ENCODE measurements at regions of chr10 and their contacts with region 1.

Region 1: DNA sequence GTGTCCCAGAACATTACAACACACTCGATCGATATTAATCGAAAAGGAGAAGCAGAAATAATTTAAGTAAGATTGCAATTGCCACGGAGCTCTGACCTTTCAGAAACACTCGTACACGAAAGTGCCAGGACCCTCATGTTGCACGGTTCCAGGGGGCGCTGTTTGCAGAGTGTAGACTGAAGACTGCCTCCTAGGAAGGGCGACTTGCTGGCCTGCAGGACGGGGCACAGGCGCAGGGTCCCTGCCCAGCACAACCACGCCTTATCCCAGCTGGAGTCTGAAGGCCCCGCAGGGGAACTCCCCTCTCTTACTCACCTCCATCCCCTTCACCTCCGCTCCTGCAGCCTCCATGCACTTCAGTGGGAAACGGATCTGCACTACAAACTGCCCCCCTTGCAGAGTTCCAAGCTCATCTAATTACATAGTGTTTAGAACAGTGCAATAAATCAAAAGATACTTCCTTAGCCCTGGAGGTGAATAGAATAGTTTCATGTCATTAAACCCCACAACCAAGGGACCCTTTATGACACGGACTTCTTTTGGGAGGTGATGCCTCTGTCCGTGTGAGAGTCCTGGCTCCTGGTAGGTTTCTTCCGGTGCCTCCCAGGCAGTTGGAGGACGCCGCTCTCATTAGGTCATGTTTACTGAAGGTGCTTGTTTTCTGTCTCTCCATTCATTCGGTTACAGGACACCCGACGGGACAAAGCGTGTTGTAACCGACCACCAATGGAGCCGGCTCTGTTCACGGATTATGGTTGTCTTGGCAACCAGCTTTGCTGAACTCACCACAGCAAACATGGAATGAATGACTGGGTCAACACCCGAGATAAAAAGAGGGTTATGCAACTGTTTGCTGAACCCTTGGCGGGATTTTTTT is 262.2 kb downstream of the BAMBI start:
- DNase-seq: peak; percentile 88
- ATAC-seq: peak; percentile 93
- H3K4me3 Mint-ChIP-seq: peak overlapping the region; percentile 75
- H3K27ac Mint-ChIP-seq: peak overlapping the region; percentile 89
- H3K4me1 Mint-ChIP-seq: peaks cover 17% of the 10 kb centered on the region
- H3K27me3 Mint-ChIP-seq: no peaks in the 10 kb centered on the region
- CTCF ChIP-seq: peak; percentile 65

Region 2: DNA sequence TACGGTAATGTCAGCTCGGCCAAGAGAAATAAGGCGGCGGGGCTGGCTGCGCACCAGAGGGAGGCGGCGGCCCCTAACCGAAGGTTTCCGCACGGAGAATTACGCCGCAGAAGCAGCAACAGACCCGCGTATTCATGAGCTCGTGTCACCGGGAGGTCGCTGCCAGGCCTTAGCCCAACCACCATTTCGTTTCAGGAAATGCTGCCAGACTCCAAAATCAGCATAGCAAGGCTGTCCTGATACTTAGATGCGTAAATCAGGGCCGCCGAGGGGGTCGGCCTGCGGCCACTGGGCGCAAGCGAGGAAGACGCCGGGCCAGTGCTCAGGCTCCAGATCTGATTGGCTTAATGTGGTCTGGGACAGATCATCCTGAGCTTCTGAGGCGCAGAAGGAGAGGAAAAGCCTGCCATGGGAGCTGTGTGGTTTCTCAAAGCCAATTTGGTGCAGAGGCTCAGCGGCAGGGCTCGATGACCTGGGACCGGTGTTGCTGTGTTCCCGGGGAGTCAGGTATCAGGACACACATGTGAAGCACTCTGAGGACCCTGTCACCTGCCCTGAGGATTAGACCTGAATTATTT is 14.3 kb before region 1 on chr10:
- CTCF ChIA-PET with region 1: interaction called, 14 read pairs
- POLR2A ChIA-PET with region 1: no interaction called
- DNase-seq: peak; percentile 50
- ATAC-seq: peak; percentile 77
- H3K4me3 Mint-ChIP-seq: peak overlapping the region; percentile 30; the same call in 1 of the 2 replicates
- H3K27ac Mint-ChIP-seq: peak overlapping the region; percentile 45; the same call in 1 of the 2 replicates
- H3K4me1 Mint-ChIP-seq: peaks cover 23% of the 10 kb centered on the region
- H3K27me3 Mint-ChIP-seq: peaks cover 4% of the 10 kb centered on the region; the same call in 1 of the 2 replicates
- CTCF ChIP-seq: no peak

Measured in WTC11 (cell line).